ENCODE measurements at regions of chr10 and their contacts with region 1.

Region 1: GRCh38 chr10:27568196-27569175 is 64.4 kb downstream of the RAB18 start:
- DNase-seq: no peak
- ATAC-seq: peak in 5 of 8 donors; percentile 34 to 66 (median 48)
- H3K4me3 ChIP-seq: no peak overlapping the region
- H3K27ac ChIP-seq: peak overlapping the region in 1 of 10 donors; percentile 28
- H3K4me1 ChIP-seq: peaks cover 0 to 20% (median 0%) of the 10 kb centered on the region in 9 donors
- H3K27me3 ChIP-seq: no peaks in the 10 kb centered on the region
- CTCF ChIP-seq: no peak

Region 2: DNA sequence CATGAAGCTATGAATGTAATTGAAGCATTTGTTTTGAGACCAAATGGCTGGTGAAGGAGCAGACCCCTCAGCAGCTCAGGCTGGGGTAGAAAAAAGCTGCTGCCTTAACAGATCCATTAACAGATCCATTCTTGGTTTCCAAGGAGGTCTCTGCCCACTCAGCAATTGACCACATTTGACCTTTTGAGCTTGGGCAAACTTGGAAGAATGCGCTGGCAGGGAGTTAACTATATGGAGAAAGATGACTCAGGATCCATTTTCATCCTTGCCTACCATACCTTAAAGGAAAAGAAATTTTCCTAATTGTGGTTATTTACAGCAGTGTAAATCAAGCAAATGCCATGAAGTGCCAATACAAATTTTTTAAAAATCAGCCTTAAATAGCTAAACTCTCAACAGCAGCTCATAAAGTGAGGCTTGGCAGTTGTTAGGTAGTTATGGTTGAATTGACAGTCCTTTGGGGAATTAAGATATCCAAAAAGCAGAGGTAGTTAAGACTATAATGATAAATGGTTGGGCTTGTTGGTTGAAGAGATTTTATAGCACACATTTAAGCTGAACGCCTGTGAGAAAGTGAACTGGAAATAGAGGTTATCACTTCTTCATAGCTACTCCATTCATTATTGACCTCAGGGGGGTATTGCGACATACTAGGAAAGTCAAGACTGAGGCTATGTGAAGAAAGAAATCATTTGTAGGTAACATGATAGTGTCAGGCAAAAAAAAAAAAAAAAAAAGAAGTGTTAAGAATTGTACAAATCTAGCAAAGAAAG is 93.2 kb after region 1 on chr10:
- intact Hi-C with region 1: loop called in 1 of 10 experiments (anchors 10 kb)
- DNase-seq: no peak
- ATAC-seq: no peak
- H3K4me3 ChIP-seq: no peak overlapping the region
- H3K27ac ChIP-seq: no peak overlapping the region
- H3K4me1 ChIP-seq: peaks cover 0 to 27% (median 0%) of the 10 kb centered on the region in 9 donors
- H3K27me3 ChIP-seq: peaks cover 0 to 10% (median 0%) of the 10 kb centered on the region in 7 donors
- CTCF ChIP-seq: no peak

Region 3: DNA sequence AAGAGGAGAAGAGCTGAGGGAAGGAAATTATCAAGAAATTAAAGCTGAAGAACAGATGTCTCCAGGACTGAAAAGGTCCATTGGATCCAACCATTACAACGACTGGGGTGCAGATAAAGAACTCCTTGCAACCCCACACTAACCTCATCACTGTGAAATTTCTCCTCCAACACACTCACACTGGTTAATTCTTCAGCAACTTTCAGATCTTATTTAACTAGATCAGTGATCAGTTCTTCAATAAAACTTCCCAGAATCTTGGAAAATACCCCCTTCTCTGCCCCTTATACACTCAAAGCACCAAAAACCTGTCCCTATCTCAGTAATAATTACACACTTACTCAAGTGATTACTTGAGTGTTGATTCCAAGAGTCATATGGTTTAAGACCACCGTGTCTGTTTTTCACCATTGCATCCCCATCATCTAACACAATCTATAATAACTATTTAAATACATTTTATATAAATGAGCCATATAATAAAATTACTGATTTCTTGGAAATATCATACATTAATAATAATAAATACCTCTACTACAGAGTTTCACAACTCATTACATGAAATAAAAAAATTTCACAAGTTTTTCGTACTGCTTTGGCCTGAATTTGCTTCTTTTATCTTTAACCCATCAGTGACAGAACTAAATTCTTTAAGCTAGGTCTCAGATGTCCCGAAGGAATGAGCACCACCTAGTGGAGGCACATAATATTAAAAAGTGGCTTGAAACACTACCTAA is 610.7 kb after region 1 on chr10:
- intact Hi-C with region 1: loop called in 4 of 10 experiments (anchors 10 kb)
- DNase-seq: peak in 1 of 2 donors; percentile 21
- ATAC-seq: peak in 2 of 8 donors; percentile 56 to 61
- H3K4me3 ChIP-seq: no peak overlapping the region
- H3K27ac ChIP-seq: peak overlapping the region in 1 of 10 donors; percentile 2
- H3K4me1 ChIP-seq: peaks cover 0 to 21% (median 5%) of the 10 kb centered on the region in 9 donors
- H3K27me3 ChIP-seq: peaks cover 0 to 8% (median 0%) of the 10 kb centered on the region in 7 donors
- CTCF ChIP-seq: peak; percentile 58 to 83 (median 73)

Region 4: DNA sequence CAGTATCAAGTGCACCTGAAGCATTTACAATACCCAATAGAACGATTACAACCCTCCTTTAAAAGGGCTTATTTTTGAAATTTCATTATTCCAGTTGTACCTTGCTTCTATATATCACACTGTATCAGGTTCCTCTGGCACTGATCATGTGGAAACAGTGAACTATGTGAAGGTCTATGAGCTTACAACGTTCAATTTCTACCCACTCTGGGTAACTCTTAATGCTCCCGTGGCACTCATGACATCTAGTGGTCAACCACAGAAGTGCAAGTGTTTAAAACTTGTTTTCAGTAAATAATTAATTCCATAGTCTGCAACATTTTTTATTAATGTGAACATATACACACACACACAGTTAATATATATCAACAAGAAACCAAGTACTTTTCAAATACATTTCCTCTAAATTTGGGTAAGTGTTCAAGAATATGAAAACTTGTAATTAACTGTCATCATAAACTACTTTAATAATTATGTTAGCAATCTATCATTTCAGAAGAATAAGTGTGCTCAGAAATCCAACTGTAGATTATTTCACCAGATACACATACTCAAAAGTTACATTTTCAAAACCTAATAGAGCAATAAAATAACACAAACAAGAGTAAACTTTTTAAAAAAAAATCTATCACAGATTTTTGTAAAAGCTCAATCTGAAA is 673.4 kb after region 1 on chr10:
- intact Hi-C with region 1: loop called in 3 of 10 experiments (anchors 5 kb)
- DNase-seq: peak in 1 of 2 donors; percentile 28
- ATAC-seq: peak in 6 of 8 donors; percentile 56 to 81 (median 71)
- H3K4me3 ChIP-seq: no peak overlapping the region
- H3K27ac ChIP-seq: no peak overlapping the region
- H3K4me1 ChIP-seq: peaks cover 0 to 20% (median 0%) of the 10 kb centered on the region in 9 donors
- H3K27me3 ChIP-seq: no peaks in the 10 kb centered on the region
- CTCF ChIP-seq: peak; percentile 75 to 94 (median 91)

Measured in heart right ventricle (tissue), 16 donors.